ENCODE measurements at regions of chr3 and their contacts with region 1.

Region 1: GRCh38 chr3:154323891-154324738 is at the start of gene DHX36:
- DNase-seq: peak; percentile 93
- H3K4me3 Mint-ChIP-seq: peak within 1 kb of the TSS; percentile 84
- H3K27ac Mint-ChIP-seq: peak within 1 kb of the TSS; percentile 96
- H3K4me1 Mint-ChIP-seq: peaks cover 31% of the 10 kb centered on the region
- H3K27me3 Mint-ChIP-seq: no peaks in the 10 kb centered on the region
- total RNA-seq, gene DHX36: 58.2 to 62.6 TPM

Region 2: GRCh38 chr3:153628591-153628990 is 695.5 kb before region 1 on chr3:
- CTCF ChIA-PET with region 1: no interaction called
- intact Hi-C with region 1: loop called (anchors 5 kb)
- DNase-seq: peak; percentile 33
- H3K4me3 Mint-ChIP-seq: no peak overlapping the region
- H3K27ac Mint-ChIP-seq: peak overlapping the region; percentile 68
- H3K4me1 Mint-ChIP-seq: peaks cover 83% of the 10 kb centered on the region
- H3K27me3 Mint-ChIP-seq: no peaks in the 10 kb centered on the region

Region 3: GRCh38 chr3:153927107-153927506 is 397.0 kb before region 1 on chr3:
- CTCF ChIA-PET with region 1: no interaction called
- intact Hi-C with region 1: no loop called
- DNase-seq: no peak
- H3K4me3 Mint-ChIP-seq: no peak overlapping the region
- H3K27ac Mint-ChIP-seq: no peak overlapping the region
- H3K4me1 Mint-ChIP-seq: no peaks in the 10 kb centered on the region
- H3K27me3 Mint-ChIP-seq: peaks cover 5% of the 10 kb centered on the region

Region 4: GRCh38 chr3:154120961-154121700 is 203.0 kb before region 1 on chr3 and contains the start of gene ARHGEF26:
- CTCF ChIA-PET with region 1: no interaction called
- intact Hi-C with region 1: loop called (anchors 1 kb)
- DNase-seq: peak; percentile 89
- H3K4me3 Mint-ChIP-seq: peak within 1 kb of the TSS; percentile 79
- H3K27ac Mint-ChIP-seq: no peak within 1 kb of the TSS
- H3K4me1 Mint-ChIP-seq: peaks cover 12% of the 10 kb centered on the region
- H3K27me3 Mint-ChIP-seq: peaks cover 58% of the 10 kb centered on the region
- total RNA-seq, gene ARHGEF26: 0.25 to 0.45 TPM

Region 5: DNA sequence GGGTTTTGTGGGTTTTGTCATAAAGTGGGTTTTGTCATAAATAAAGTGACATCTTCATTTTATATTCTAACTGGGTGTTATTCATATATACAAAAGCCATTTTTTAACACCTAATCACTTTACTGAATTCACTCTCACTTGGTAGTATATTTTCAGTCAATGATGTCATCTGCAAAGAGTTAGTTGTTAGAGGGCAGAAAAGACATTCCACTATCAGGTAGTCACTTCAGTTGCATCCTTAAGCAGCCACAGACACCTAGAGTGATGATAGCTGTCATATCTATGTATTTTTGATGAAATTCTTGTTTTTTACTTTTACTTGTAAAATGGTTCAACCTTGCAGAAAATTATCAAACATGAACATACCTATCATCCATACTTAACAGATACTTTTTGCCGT is 88.8 kb before region 1 on chr3:
- CTCF ChIA-PET with region 1: no interaction called
- intact Hi-C with region 1: no loop called
- DNase-seq: no peak
- H3K4me3 Mint-ChIP-seq: no peak overlapping the region
- H3K27ac Mint-ChIP-seq: no peak overlapping the region
- H3K4me1 Mint-ChIP-seq: peaks cover 2% of the 10 kb centered on the region
- H3K27me3 Mint-ChIP-seq: peaks cover 17% of the 10 kb centered on the region

Region 6: GRCh38 chr3:154310840-154311239 is 13.3 kb before region 1 on chr3:
- CTCF ChIA-PET with region 1: interaction called, 6 read pairs
- intact Hi-C with region 1: loop called (anchors 1 kb)
- DNase-seq: no peak
- H3K4me3 Mint-ChIP-seq: no peak overlapping the region
- H3K27ac Mint-ChIP-seq: no peak overlapping the region
- H3K4me1 Mint-ChIP-seq: peaks cover 20% of the 10 kb centered on the region
- H3K27me3 Mint-ChIP-seq: no peaks in the 10 kb centered on the region